Endothelial cell of umbilical vein (primary cell): ENCODE measurements at regions of chr1 and their contacts with region 1.

Region 1: DNA sequence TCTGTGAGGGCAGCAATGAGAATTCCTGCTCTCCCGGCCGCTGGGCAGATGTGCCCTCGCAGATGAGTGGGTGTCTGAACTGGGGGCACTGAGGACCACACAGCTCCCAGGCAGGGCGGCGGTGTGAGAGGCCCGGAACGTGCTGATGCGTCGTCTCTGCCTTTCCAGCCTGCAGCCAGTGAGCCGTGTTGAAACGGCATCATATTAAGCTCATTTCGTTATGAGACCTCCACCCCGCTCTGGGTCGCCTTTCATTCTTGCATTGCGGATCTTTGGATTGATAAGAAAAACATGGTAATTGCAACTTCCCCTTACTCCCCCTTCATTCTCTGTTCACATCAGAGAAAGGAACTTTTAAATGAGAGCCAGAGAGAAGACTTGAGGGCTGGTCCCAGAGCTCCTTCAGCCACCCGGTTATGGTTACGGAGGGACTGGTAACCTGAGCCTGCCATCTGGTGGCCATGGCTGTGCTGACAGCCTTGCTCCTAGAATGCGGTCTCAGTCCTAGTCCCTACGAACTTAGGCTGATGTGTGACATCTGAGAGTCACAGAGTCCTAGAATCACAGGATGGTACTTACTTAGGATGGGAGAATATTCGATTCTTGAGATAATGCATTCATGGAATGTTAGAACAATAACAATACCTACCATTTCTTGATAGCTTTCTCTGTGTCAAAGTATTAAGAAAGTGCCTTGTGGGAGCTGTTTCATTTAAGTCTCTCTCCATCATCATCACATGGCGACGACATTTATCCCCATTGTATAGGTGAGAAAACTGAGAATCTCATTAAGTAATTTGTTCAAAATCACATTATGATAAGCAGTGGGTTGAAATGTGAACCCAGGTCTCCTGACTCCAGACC is 271.0 kb downstream of the TRABD2B start:
- DNase-seq: peak; percentile 74
- H3K4me3 ChIP-seq: no peak overlapping the region
- H3K27ac ChIP-seq: no peak overlapping the region
- H3K4me1 ChIP-seq: no peaks in the 10 kb centered on the region
- H3K27me3 ChIP-seq: peaks cover 34 to 37% of the 10 kb centered on the region in 2 experiments
- CTCF ChIP-seq: peak; percentile 83 to 95
- POLR2A ChIP-seq: no peak

Region 2: GRCh38 chr1:47388891-47389238 is 337.4 kb before region 1 on chr1:
- CTCF ChIA-PET with region 1: interaction called, 148 read pairs
- POLR2A ChIA-PET with region 1: no interaction called
- dilution Hi-C with region 1: no loop called
- intact Hi-C with region 1: loop called (anchors 1 kb)
- DNase-seq: peak; percentile 68
- H3K4me3 ChIP-seq: no peak overlapping the region
- H3K27ac ChIP-seq: no peak overlapping the region
- H3K4me1 ChIP-seq: no peaks in the 10 kb centered on the region
- H3K27me3 ChIP-seq: peaks cover 0 to 2% of the 10 kb centered on the region in 2 experiments
- CTCF ChIP-seq: peak; percentile 66 to 84
- POLR2A ChIP-seq: no peak

Region 3: DNA sequence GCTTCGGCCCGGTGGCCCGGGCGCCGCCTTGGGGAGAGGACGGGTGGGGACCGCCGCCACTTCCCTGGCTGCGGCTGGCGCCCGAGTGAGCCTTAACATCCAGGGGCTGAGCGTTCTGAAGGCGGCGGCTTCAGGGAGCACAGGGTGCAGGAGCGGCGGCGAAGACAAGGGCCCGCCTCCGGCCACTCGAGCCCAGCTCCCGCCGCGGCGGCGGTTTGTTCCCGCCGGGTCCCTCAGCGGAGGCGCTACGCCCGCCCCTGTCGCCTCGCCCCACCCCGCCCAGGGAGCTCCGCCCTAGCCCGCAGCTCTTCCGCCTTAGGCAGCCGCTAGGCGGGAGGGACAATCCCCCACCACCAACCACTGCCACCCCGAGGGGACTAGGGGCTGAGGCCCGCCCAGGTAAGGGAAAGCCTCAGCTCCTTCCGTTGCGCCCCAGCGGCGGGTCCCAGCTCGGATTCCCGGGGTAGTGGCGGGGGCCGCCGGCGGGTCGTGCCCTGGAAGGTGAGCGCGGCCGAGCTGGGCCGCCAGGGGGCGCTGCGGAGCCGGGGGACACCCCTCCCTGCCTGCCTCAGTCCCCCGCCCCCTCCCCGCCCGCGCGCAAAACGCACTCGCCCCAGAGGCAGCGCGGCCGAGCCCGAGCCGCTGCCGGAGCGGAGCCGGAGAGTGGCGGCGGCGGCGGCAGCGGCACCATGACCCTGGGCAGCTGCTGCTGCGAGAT is 288.6 kb before region 1 on chr1 and contains the start of gene FOXD2:
- CTCF ChIA-PET with region 1: interaction called, 691 read pairs
- POLR2A ChIA-PET with region 1: interaction called, 3 read pairs
- dilution Hi-C with region 1: no loop called
- intact Hi-C with region 1: loop called (anchors 1 kb)
- DNase-seq: peak; percentile 82
- H3K4me3 ChIP-seq: peak within 1 kb of the TSS; percentile 55 to 71 (median 57)
- H3K27ac ChIP-seq: no peak within 1 kb of the TSS
- H3K4me1 ChIP-seq: peaks cover 17% of the 10 kb centered on the region
- H3K27me3 ChIP-seq: peaks cover 42 to 60% of the 10 kb centered on the region in 2 experiments
- CTCF ChIP-seq: peak; percentile 76 to 84
- POLR2A ChIP-seq: peak; percentile 39
- total RNA-seq, gene FOXD2: 0.07 and 0.09 TPM in 2 replicates

Region 4: GRCh38 chr1:47521034-47521881 is 205.0 kb before region 1 on chr1:
- CTCF ChIA-PET with region 1: interaction called, 171 read pairs
- POLR2A ChIA-PET with region 1: no interaction called
- dilution Hi-C with region 1: no loop called
- intact Hi-C with region 1: no loop called
- DNase-seq: peak; percentile 73
- H3K4me3 ChIP-seq: no peak overlapping the region
- H3K27ac ChIP-seq: no peak overlapping the region
- H3K4me1 ChIP-seq: no peaks in the 10 kb centered on the region
- H3K27me3 ChIP-seq: peaks cover 9 to 17% of the 10 kb centered on the region in 2 experiments
- CTCF ChIP-seq: no peak
- POLR2A ChIP-seq: no peak

Region 5: GRCh38 chr1:47703981-47704596 is 22.1 kb before region 1 on chr1:
- CTCF ChIA-PET with region 1: interaction called, 182 read pairs
- POLR2A ChIA-PET with region 1: no interaction called
- dilution Hi-C with region 1: no loop called
- intact Hi-C with region 1: no loop called
- DNase-seq: peak; percentile 39
- H3K4me3 ChIP-seq: no peak overlapping the region
- H3K27ac ChIP-seq: no peak overlapping the region
- H3K4me1 ChIP-seq: no peaks in the 10 kb centered on the region
- H3K27me3 ChIP-seq: peaks cover 20 to 27% of the 10 kb centered on the region in 2 experiments
- CTCF ChIP-seq: peak in 1 of 2 donors; percentile 12
- POLR2A ChIP-seq: no peak

Region 6: GRCh38 chr1:47755101-47755990 is 29.1 kb after region 1 on chr1:
- CTCF ChIA-PET with region 1: interaction called, 16 read pairs
- POLR2A ChIA-PET with region 1: no interaction called
- dilution Hi-C with region 1: no loop called
- intact Hi-C with region 1: no loop called
- DNase-seq: no peak
- H3K4me3 ChIP-seq: no peak overlapping the region
- H3K27ac ChIP-seq: no peak overlapping the region
- H3K4me1 ChIP-seq: no peaks in the 10 kb centered on the region
- H3K27me3 ChIP-seq: no peaks in the 10 kb centered on the region
- CTCF ChIP-seq: peak; percentile 41 to 50
- POLR2A ChIP-seq: no peak